Activated CD4-positive, alpha-beta T cell treated with anti-CD3 and anti-CD28 coated beads for 36 hours (primary cell): ENCODE measurements at regions of chr6 and their contacts with region 1.

Region 1: DNA sequence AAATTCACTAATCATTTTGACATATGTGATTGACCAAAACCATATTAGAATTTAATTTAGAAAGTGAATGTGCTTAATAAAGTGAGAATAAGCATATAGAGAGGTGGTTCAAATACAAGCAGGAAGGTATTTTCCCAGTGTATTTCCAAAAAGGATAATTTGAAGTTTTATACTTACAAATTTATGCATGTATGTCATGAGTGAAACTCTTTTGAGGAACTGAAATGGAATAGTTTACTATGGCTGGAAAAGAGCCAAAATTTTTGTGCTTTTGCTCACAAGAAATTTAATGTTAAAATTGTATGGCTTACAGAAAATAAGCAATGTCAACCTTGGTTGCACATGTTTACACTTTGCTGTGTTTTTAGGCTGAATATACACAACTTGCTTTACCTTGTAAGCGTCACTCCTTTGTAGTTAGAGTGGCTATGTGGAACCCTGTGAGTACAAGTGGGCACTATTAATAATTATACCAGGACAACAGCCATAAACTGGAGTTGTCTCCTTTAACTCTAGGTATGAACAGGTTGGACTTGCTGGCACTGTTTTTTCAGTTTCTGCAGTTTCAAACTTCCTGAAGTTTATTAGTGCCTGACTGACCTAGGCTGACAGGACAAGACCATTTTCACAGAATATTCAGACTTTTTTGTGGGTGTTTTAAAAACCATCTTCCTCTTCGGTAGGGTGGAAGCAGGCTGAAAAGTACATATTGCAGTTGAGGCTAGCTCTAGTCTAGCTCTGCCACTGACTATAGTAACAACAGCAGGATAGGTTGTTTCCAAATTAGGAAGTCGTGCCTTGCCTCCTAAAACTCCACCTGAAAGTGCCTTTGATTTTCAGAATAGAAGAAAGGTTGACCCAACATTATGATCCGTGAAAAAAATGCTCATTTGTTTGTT is 6.0 kb downstream of the AFDN start:
- DNase-seq: no peak
- ATAC-seq: no peak
- H3K4me3 Mint-ChIP-seq: no peak overlapping the region
- H3K27ac Mint-ChIP-seq: no peak overlapping the region
- H3K4me1 Mint-ChIP-seq: peaks cover 21% of the 10 kb centered on the region
- H3K27me3 Mint-ChIP-seq: peaks cover 39% of the 10 kb centered on the region

Region 2: GRCh38 chr6:167760979-167761793 is 71.6 kb before region 1 on chr6:
- CTCF ChIA-PET with region 1: no interaction called
- POLR2A ChIA-PET with region 1: no interaction called
- intact Hi-C with region 1: no loop called
- DNase-seq: no peak
- ATAC-seq: no peak
- H3K4me3 Mint-ChIP-seq: no peak overlapping the region
- H3K27ac Mint-ChIP-seq: no peak overlapping the region
- H3K4me1 Mint-ChIP-seq: no peaks in the 10 kb centered on the region
- H3K27me3 Mint-ChIP-seq: peaks cover 4% of the 10 kb centered on the region

Region 3: GRCh38 chr6:167855825-167856425 is 23.2 kb after region 1 on chr6:
- CTCF ChIA-PET with region 1: interaction called, 3 read pairs
- POLR2A ChIA-PET with region 1: no interaction called
- intact Hi-C with region 1: loop called in 1 of 2 experiments (anchors 2 kb)
- DNase-seq: peak; percentile 7
- ATAC-seq: peak; percentile 77
- H3K4me3 Mint-ChIP-seq: no peak overlapping the region
- H3K27ac Mint-ChIP-seq: no peak overlapping the region
- H3K4me1 Mint-ChIP-seq: peaks cover 6% of the 10 kb centered on the region
- H3K27me3 Mint-ChIP-seq: peaks cover 15% of the 10 kb centered on the region

Region 4: DNA sequence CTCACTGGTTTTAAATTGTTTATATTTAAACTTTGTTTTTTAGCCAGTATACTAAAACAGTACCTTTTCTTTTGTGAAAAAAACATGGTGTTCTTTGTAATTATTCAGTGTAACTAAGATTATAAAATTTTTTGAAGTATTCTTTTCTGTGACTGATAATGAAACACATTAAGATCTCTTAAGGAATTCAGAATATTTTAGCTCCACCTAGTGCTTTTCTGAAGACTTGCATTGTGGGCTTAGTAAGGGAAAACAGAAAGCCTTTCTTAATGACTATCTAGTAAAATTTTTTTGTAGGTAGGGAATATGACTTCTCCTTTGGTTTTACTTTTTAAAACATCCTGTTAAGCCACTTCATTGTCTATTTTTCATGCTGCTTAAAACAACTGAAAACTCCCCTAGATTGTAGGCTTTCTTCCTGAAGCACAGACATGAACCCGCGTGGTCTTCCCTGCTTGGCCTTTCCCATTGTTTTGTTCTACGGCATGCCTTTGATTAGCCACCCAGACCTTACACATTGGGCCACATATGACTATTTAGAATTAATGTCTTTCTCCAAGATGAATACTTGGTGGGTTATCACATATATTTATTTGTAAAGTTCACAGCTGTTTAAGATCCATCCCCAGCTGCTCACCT is 66.0 kb after region 1 on chr6:
- CTCF ChIA-PET with region 1: no interaction called
- POLR2A ChIA-PET with region 1: no interaction called
- intact Hi-C with region 1: no loop called
- DNase-seq: no peak
- ATAC-seq: no peak
- H3K4me3 Mint-ChIP-seq: no peak overlapping the region
- H3K27ac Mint-ChIP-seq: no peak overlapping the region
- H3K4me1 Mint-ChIP-seq: no peaks in the 10 kb centered on the region
- H3K27me3 Mint-ChIP-seq: no peaks in the 10 kb centered on the region